B cell (primary cell): ENCODE measurements at regions of chr9 and their contacts with region 1.

Region 1: DNA sequence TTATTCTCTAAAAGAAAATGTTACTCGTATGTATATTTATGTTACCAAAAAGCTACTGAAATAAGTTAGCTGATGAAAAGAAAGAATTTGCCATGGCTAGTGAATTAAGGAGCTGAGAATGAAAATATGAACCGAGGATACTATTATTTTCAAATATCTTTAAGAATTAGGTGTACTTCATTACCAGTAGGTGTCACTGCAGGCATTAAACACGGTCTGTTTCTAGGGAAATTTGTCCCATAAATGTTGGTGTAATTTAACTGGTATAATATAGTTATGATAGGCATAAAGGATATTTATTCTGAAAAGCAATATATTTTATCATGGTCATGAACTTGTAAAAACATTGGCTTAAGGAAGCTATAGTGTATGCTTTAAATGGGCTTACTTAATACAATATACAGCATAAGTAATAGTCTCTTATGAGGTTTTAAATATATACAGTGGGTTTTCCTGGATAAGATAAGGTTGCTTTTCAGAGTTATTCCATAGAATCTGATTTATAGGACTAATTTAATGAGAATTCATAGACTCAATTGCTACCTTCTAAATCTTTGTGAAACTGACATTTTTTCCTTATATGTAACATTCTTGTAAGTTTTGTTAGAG is 72.4 kb upstream of the MPDZ start:
- DNase-seq: peak; percentile 3
- ATAC-seq: no peak
- H3K4me3 ChIP-seq: no peak overlapping the region
- H3K4me3 Mint-ChIP-seq: no peak overlapping the region
- H3K27ac ChIP-seq: no peak overlapping the region
- H3K27ac Mint-ChIP-seq: no peak overlapping the region
- H3K4me1 ChIP-seq: no peaks in the 10 kb centered on the region
- H3K4me1 Mint-ChIP-seq: no peaks in the 10 kb centered on the region
- H3K27me3 ChIP-seq: no peaks in the 10 kb centered on the region
- H3K27me3 Mint-ChIP-seq: no peaks in the 10 kb centered on the region
- CTCF ChIP-seq: peak; percentile 46

Region 2: DNA sequence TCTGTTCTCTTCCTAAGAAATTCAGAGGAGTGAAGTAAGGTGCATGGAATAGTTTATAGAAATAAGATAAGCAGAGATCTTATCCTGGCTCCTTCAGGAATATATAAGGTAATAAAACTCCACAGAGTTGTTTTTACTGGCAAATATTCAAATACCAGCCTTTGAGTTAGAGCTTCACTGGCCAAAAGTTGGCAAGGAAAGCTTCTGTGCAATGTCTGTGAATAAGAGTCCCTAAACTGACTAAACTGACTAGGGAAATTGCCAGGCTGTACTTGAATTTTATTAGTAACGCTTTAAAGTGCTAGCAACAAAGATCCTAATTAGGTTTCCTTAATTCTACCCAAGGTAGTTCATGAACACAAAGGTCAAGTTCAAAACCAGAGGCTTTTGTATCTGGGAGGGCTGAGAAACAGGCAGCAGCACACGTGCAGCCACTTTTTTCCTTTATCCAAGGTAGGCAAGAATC is 58.7 kb after region 1 on chr9:
- CTCF ChIA-PET with region 1: no interaction called
- POLR2A ChIA-PET with region 1: no interaction called
- intact Hi-C with region 1: loop called (anchors 2 kb)
- DNase-seq: no peak
- ATAC-seq: no peak
- H3K4me3 ChIP-seq: no peak overlapping the region
- H3K4me3 Mint-ChIP-seq: no peak overlapping the region
- H3K27ac ChIP-seq: no peak overlapping the region
- H3K27ac Mint-ChIP-seq: no peak overlapping the region
- H3K4me1 ChIP-seq: no peaks in the 10 kb centered on the region
- H3K4me1 Mint-ChIP-seq: no peaks in the 10 kb centered on the region
- H3K27me3 ChIP-seq: no peaks in the 10 kb centered on the region
- H3K27me3 Mint-ChIP-seq: no peaks in the 10 kb centered on the region
- CTCF ChIP-seq: no peak

Region 3: DNA sequence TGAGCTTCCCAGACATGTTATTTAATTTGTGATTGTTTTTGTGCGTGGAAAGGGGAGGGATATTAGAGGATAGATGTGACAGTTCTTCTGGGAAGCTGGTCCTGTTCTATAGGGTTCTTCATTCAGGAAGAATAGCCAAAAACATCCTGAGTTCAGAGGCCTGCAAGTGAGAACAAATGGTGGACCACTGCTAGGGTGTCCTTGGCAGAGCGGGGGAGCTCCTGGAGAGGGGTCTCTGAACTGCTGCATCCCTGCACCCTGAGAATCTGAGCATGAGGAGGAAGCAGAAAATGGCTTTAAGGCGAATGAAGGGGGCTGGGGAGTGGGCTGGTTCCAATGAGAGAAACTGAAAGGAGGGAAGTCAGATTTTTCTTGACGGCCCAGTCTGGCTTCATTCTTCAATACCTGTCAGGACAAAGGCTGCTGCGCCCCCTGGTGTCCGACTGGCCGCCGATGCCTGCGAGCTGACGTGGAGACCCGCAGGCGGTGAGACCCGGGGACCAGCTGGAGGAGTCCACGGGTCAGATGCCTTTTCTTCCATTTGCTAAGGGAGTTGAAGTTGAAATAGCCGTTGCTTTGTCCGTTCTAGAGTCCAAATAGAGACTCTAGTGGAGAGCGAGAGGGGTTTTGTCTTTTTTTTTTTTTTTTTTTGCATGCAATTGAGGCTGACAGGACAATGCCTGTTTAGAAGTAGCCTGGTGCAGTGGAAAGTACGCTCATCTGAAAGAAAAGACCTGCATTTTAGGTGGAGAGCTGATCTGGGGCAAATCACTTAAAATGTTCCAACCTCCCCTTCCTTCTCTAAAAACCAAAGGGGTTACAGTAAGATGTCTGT is 1001.6 kb after region 1 on chr9:
- CTCF ChIA-PET with region 1: interaction called, 10 read pairs
- POLR2A ChIA-PET with region 1: no interaction called
- intact Hi-C with region 1: loop called (anchors 5 kb)
- DNase-seq: peak; percentile 60
- ATAC-seq: peak; percentile 51
- H3K4me3 ChIP-seq: no peak overlapping the region
- H3K4me3 Mint-ChIP-seq: no peak overlapping the region
- H3K27ac ChIP-seq: no peak overlapping the region
- H3K27ac Mint-ChIP-seq: no peak overlapping the region
- H3K4me1 ChIP-seq: peaks cover 10 to 11% of the 10 kb centered on the region in 2 donors
- H3K4me1 Mint-ChIP-seq: peaks cover 4% of the 10 kb centered on the region
- H3K27me3 ChIP-seq: peaks cover 0 to 45% (median 17%) of the 10 kb centered on the region in 4 experiments
- H3K27me3 Mint-ChIP-seq: peaks cover 63% of the 10 kb centered on the region
- CTCF ChIP-seq: peak; percentile 70

Region 4: DNA sequence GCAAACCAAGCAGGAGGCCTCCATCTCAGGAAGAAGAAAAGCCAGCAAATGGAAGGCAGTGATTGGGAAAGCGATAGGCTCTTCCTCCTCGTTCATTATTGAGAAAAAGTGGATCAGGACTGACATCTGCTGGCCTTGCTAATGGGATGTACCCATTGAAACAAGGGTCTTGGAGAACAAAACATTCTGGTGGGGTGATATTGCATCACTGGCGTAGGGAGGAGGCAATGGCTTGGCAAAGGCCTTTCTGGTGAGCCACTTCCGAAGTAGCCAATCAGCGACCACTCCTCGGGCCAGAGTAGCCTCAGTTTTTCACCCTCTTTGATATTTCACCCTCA is 1048.7 kb after region 1 on chr9:
- CTCF ChIA-PET with region 1: no interaction called
- POLR2A ChIA-PET with region 1: no interaction called
- intact Hi-C with region 1: no loop called
- DNase-seq: no peak
- ATAC-seq: no peak
- H3K4me3 ChIP-seq: no peak overlapping the region
- H3K4me3 Mint-ChIP-seq: no peak overlapping the region
- H3K27ac ChIP-seq: no peak overlapping the region
- H3K27ac Mint-ChIP-seq: no peak overlapping the region
- H3K4me1 ChIP-seq: no peaks in the 10 kb centered on the region
- H3K4me1 Mint-ChIP-seq: no peaks in the 10 kb centered on the region
- H3K27me3 ChIP-seq: no peaks in the 10 kb centered on the region
- H3K27me3 Mint-ChIP-seq: peaks cover 8% of the 10 kb centered on the region
- CTCF ChIP-seq: no peak